Aorta (tissue), 5 donors: ENCODE measurements at regions of chr4 and their contacts with region 1.

Region 1: GRCh38 chr4:154551872-154552686 is 1.9 kb upstream of the PLRG1 start:
- DNase-seq: peak; percentile 70 to 86
- ATAC-seq: peak; percentile 80
- H3K4me3 ChIP-seq: no peak overlapping the region
- H3K27ac ChIP-seq: no peak overlapping the region
- H3K4me1 ChIP-seq: peaks cover 0 to 3% of the 10 kb centered on the region in 2 donors
- H3K27me3 ChIP-seq: no peaks in the 10 kb centered on the region

Region 2: GRCh38 chr4:154618708-154619315 is 66.7 kb after region 1 on chr4:
- intact Hi-C with region 1: loop called (anchors 2 kb)
- DNase-seq: peak in 1 of 2 donors; percentile 50
- ATAC-seq: no peak
- H3K4me3 ChIP-seq: no peak overlapping the region
- H3K27ac ChIP-seq: no peak overlapping the region
- H3K4me1 ChIP-seq: no peaks in the 10 kb centered on the region
- H3K27me3 ChIP-seq: no peaks in the 10 kb centered on the region

Region 3: GRCh38 chr4:154781126-154781982 is 229.3 kb after region 1 on chr4 and contains the start of gene RBM46:
- intact Hi-C with region 1: loop called (anchors 5 to 10 kb)
- DNase-seq: no peak
- ATAC-seq: peak; percentile 19
- H3K4me3 ChIP-seq: no peak within 1 kb of the TSS
- H3K27ac ChIP-seq: no peak within 1 kb of the TSS
- H3K4me1 ChIP-seq: no peaks in the 10 kb centered on the region
- H3K27me3 ChIP-seq: no peaks in the 10 kb centered on the region
- total RNA-seq, gene RBM46: not detected

Region 4: GRCh38 chr4:155353923-155354540 is 802.0 kb after region 1 on chr4:
- intact Hi-C with region 1: loop called (anchors 10 kb)
- DNase-seq: peak; percentile 82 to 86
- ATAC-seq: peak; percentile 91
- H3K4me3 ChIP-seq: no peak overlapping the region
- H3K27ac ChIP-seq: no peak overlapping the region
- H3K4me1 ChIP-seq: no peaks in the 10 kb centered on the region
- H3K27me3 ChIP-seq: no peaks in the 10 kb centered on the region